Spleen (tissue), 13 donors: ENCODE measurements at regions of chr6 and their contacts with region 1.

Region 1: DNA sequence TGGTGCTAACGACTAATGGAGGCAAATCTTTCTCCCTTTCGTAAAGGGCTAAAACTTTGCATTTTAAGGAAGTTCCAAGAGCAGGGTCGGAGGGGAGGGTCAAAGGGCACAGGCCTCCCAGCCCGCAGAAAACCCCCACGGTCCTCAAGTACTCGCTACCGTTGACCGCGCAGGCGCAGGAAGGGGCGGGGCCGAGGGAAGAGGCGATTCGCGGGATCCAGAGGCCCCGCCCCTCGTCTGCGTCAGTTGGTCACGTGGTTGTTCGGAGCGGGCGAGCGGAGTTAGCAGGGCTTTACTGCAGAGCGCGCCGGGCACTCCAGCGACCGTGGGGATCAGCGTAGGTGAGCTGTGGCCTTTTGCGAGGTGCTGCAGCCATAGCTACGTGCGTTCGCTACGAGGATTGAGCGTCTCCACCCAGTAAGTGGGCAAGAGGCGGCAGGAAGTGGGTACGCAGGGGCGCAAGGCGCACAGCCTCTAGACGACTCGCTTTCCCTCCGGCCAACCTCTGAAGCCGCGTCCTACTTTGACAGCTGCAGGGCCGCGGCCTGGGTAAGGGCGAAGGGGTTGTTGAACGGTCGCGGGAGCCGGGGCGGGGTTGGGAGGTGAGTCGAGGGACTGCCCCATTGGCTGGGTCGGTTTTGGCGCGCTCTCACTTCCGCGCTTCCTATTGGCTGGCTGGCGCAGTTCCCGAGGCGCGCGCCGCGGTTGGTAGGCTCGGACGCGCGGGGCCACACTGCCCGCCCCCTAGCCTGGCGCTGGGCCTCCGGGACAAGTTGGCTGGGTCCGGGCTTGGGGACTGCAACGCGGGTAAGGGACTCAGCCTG is at the start of gene GMNN:
- DNase-seq: peak; percentile 100
- H3K4me3 ChIP-seq: peak within 1 kb of the TSS; percentile 85 to 100 (median 100)
- H3K27ac ChIP-seq: peak within 1 kb of the TSS; percentile 77 to 98 (median 95)
- H3K4me1 ChIP-seq: peaks cover 10 to 55% (median 34%) of the 10 kb centered on the region in 6 donors
- H3K27me3 ChIP-seq: no peaks in the 10 kb centered on the region
- CTCF ChIP-seq: peak in 1 of 11 experiments; percentile 14
- POLR2A ChIP-seq: peak in 1 of 3 donors; percentile 22
- total RNA-seq, gene GMNN: 11.1 to 32.3 (median 16.7) TPM

Region 2: GRCh38 chr6:24720604-24721460 is 54.1 kb before region 1 on chr6:
- intact Hi-C with region 1: loop called (anchors 10 kb)
- DNase-seq: peak; percentile 100
- H3K4me3 ChIP-seq: peak overlapping the region; percentile 56 to 83 (median 70)
- H3K27ac ChIP-seq: peak overlapping the region; percentile 98 to 100 (median 100)
- H3K4me1 ChIP-seq: peaks cover 21 to 48% (median 44%) of the 10 kb centered on the region in 6 donors
- H3K27me3 ChIP-seq: no peaks in the 10 kb centered on the region
- CTCF ChIP-seq: peak in 3 of 11 experiments; percentile 5 to 29 (median 26)
- POLR2A ChIP-seq: peak; percentile 96 to 99 (median 98)